Naive thymus-derived CD4-positive, alpha-beta T cell (primary cell): ENCODE measurements at regions of chr11 and their contacts with region 1.

Region 1: DNA sequence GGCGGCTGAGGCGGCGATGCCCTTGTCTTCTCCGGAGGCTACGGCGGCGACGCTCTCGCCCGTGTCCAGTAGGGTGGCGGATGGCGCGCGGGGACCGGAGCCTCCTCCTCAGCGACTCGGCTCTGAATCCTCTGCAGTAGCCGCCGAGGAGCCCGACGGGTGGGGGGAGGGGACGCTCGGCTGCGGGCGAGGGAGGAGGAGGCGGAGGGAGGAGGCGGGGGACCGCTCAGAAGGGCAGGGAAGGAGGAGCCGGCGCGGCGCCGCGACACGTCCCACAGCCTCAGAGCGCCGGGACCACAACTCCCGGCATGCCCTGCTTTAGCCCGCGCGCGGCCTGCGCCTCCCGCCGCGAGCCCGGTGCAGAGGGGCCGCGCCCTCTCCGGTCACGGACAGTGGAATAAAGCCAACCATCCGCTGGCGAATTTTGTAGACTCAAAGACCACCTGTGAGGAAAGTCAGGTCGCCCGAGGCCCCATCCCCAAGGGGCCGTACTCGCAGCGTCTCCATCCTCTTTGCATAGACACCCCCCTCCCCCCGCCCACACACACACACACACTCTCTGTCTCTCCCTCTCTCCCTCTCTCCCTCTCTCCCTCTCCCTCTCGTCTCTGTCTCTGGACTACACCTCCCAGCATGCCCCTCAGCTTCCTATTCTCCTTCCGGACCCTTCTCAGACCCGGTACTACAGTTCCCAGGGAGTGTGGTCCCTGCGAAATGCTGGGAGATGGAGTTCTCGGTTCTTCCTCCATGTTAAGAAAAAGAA is at the start of gene FAM168A:
- DNase-seq: peak; percentile 82 to 92 (median 89)
- ATAC-seq: peak; percentile 96
- H3K4me3 ChIP-seq: peak within 1 kb of the TSS; percentile 71
- H3K4me3 Mint-ChIP-seq: peak within 1 kb of the TSS; percentile 90 to 97 (median 95)
- H3K27ac ChIP-seq: peak within 1 kb of the TSS; percentile 87
- H3K27ac Mint-ChIP-seq: peak within 1 kb of the TSS; percentile 91 to 97 (median 95)
- H3K4me1 ChIP-seq: peaks cover 12 to 13% of the 10 kb centered on the region in 2 donors
- H3K4me1 Mint-ChIP-seq: peaks cover 19 to 48% (median 46%) of the 10 kb centered on the region in 7 donors
- H3K27me3 ChIP-seq: no peaks in the 10 kb centered on the region
- H3K27me3 Mint-ChIP-seq: peaks cover 0 to 2% (median 0%) of the 10 kb centered on the region in 5 donors
- total RNA-seq, gene FAM168A: 18.4 to 33.0 (median 25.2) TPM

Region 2: GRCh38 chr11:72814286-72815109 is 783.6 kb before region 1 on chr11 and contains the start of gene ATG16L2:
- CTCF ChIA-PET with region 1: no interaction called
- POLR2A ChIA-PET with region 1: no interaction called
- intact Hi-C with region 1: loop called in 1 of 2 experiments (anchors 10 kb)
- DNase-seq: peak in 8 of 9 donors; percentile 53 to 96 (median 92)
- ATAC-seq: peak; percentile 89
- H3K4me3 ChIP-seq: peak within 1 kb of the TSS; percentile 89
- H3K4me3 Mint-ChIP-seq: peak within 1 kb of the TSS; percentile 97 to 99 (median 98)
- H3K27ac ChIP-seq: peak within 1 kb of the TSS; percentile 100
- H3K27ac Mint-ChIP-seq: peak within 1 kb of the TSS; percentile 86 to 99 (median 98)
- H3K4me1 ChIP-seq: peaks cover 18 to 23% of the 10 kb centered on the region in 2 donors
- H3K4me1 Mint-ChIP-seq: peaks cover 31 to 67% (median 52%) of the 10 kb centered on the region in 7 donors
- H3K27me3 ChIP-seq: no peaks in the 10 kb centered on the region
- H3K27me3 Mint-ChIP-seq: no peaks in the 10 kb centered on the region
- total RNA-seq, gene ATG16L2: 99.5 to 199 (median 166) TPM

Region 3: GRCh38 chr11:73366265-73366610 is 231.9 kb before region 1 on chr11:
- CTCF ChIA-PET with region 1: no interaction called
- POLR2A ChIA-PET with region 1: no interaction called
- intact Hi-C with region 1: loop called in 1 of 2 experiments (anchors 1 kb)
- DNase-seq: peak in 7 of 9 donors; percentile 49 to 79 (median 66)
- ATAC-seq: peak; percentile 87
- H3K4me3 ChIP-seq: peak overlapping the region; percentile 42
- H3K4me3 Mint-ChIP-seq: peak overlapping the region; percentile 48 to 82 (median 66)
- H3K27ac ChIP-seq: peak overlapping the region; percentile 78
- H3K27ac Mint-ChIP-seq: peak overlapping the region; percentile 88 to 100 (median 98)
- H3K4me1 ChIP-seq: peaks cover 30% of the 10 kb centered on the region in 2 donors
- H3K4me1 Mint-ChIP-seq: peaks cover 14 to 39% (median 20%) of the 10 kb centered on the region in 7 donors
- H3K27me3 ChIP-seq: no peaks in the 10 kb centered on the region
- H3K27me3 Mint-ChIP-seq: no peaks in the 10 kb centered on the region

Region 4: DNA sequence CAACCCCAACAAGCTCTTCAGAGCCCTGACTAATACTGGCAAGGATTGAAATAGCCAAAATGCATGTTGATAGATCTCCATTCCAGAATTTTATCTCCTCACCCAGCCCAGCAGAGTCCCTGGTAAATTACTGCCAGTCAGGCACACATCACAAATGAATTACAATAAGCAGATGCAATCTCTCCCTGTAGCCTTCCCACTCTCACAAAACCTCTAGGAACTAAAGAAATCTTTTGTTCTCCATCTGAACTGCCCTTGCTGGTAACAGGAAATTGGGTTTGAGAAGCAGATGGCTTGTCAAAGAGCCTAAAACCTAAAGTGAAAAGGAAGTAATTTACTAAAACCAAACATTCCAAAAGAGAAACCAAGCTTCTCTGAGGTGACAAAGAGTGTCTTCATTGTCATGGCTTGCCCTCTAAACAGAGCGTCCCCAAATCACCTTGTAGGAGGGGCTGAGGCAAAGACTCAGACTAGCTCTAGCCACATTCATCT is 59.7 kb before region 1 on chr11:
- CTCF ChIA-PET with region 1: no interaction called
- POLR2A ChIA-PET with region 1: no interaction called
- intact Hi-C with region 1: loop called in 1 of 2 experiments (anchors 5 kb)
- DNase-seq: peak in 4 of 9 donors; percentile 4 to 31 (median 20)
- ATAC-seq: peak; percentile 57
- H3K4me3 ChIP-seq: no peak overlapping the region
- H3K4me3 Mint-ChIP-seq: peak overlapping the region; percentile 20 to 70 (median 50)
- H3K27ac ChIP-seq: peak overlapping the region; percentile 26
- H3K27ac Mint-ChIP-seq: peak overlapping the region; percentile 49 to 93 (median 78)
- H3K4me1 ChIP-seq: peaks cover 8 to 9% of the 10 kb centered on the region in 2 donors
- H3K4me1 Mint-ChIP-seq: peaks cover 17 to 54% (median 44%) of the 10 kb centered on the region in 7 donors
- H3K27me3 ChIP-seq: no peaks in the 10 kb centered on the region
- H3K27me3 Mint-ChIP-seq: no peaks in the 10 kb centered on the region

Region 5: GRCh38 chr11:73779084-73779902 is 181.2 kb after region 1 on chr11:
- CTCF ChIA-PET with region 1: no interaction called
- POLR2A ChIA-PET with region 1: interaction called, 4 read pairs
- intact Hi-C with region 1: loop called (anchors 1 kb)
- DNase-seq: peak; percentile 88 to 98 (median 97)
- ATAC-seq: peak; percentile 99
- H3K4me3 ChIP-seq: peak overlapping the region; percentile 58
- H3K4me3 Mint-ChIP-seq: peak overlapping the region; percentile 86 to 97 (median 94)
- H3K27ac ChIP-seq: peak overlapping the region; percentile 89
- H3K27ac Mint-ChIP-seq: peak overlapping the region; percentile 94 to 100 (median 100)
- H3K4me1 ChIP-seq: peaks cover 0 to 6% of the 10 kb centered on the region in 2 donors
- H3K4me1 Mint-ChIP-seq: peaks cover 2 to 18% (median 9%) of the 10 kb centered on the region in 7 donors
- H3K27me3 ChIP-seq: no peaks in the 10 kb centered on the region
- H3K27me3 Mint-ChIP-seq: peaks cover 0 to 6% (median 0%) of the 10 kb centered on the region in 5 donors

Region 6: DNA sequence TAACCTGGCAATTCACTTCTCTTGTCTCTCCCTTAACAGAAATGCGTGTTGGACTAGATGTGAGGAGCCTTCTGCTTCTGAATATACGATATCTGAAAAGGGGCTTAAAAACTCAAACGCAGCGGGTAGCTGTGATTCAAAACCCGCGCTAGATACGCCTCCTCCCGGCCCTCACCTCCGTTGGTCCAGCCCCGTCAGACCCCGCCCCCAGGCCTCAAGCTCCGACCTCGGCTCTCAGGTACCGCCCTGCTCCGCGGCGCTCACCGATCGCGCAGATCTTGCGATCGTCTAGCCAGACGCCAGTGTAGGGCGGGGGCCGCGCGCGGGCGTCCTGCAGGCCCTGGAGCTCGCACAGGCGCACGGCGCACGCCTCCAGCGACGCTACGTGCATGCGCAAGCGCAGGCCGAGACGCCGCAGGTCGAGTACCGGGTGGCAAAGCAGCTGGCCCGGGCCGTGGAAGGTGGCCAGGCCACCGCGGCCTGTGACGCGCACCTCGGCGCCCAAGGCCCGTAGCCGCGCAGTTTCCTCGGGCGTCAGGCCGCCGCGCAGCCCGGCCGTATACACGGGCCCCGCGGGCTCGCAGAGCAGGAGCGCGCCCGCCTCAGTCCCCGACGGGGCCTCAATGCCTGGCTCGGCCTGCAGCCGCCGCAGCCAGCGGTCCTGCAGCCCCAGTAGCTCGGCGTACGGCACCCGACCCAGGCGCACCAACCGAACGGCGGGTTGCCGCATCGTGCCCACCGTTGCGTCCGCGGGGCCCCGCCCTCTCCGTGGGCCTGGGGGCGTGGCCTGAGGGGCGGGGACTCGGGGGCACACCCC is 895.0 kb after region 1 on chr11 and contains the start of gene LIPT2:
- CTCF ChIA-PET with region 1: no interaction called
- POLR2A ChIA-PET with region 1: interaction called, 4 read pairs
- intact Hi-C with region 1: loop called in 1 of 2 experiments (anchors 10 kb)
- DNase-seq: peak; percentile 92 to 98 (median 96)
- ATAC-seq: peak; percentile 97
- H3K4me3 ChIP-seq: peak within 1 kb of the TSS; percentile 90
- H3K4me3 Mint-ChIP-seq: peak within 1 kb of the TSS; percentile 74 to 92 (median 86)
- H3K27ac ChIP-seq: peak within 1 kb of the TSS; percentile 95
- H3K27ac Mint-ChIP-seq: peak within 1 kb of the TSS; percentile 73 to 96 (median 89)
- H3K4me1 ChIP-seq: peaks cover 8 to 10% of the 10 kb centered on the region in 2 donors
- H3K4me1 Mint-ChIP-seq: peaks cover 14 to 43% (median 28%) of the 10 kb centered on the region in 7 donors
- H3K27me3 ChIP-seq: no peaks in the 10 kb centered on the region
- H3K27me3 Mint-ChIP-seq: no peaks in the 10 kb centered on the region
- total RNA-seq, gene LIPT2: 1.9 to 18.2 (median 9.3) TPM